ENCODE measurements at regions of chr6 and their contacts with region 1.

Region 1: DNA sequence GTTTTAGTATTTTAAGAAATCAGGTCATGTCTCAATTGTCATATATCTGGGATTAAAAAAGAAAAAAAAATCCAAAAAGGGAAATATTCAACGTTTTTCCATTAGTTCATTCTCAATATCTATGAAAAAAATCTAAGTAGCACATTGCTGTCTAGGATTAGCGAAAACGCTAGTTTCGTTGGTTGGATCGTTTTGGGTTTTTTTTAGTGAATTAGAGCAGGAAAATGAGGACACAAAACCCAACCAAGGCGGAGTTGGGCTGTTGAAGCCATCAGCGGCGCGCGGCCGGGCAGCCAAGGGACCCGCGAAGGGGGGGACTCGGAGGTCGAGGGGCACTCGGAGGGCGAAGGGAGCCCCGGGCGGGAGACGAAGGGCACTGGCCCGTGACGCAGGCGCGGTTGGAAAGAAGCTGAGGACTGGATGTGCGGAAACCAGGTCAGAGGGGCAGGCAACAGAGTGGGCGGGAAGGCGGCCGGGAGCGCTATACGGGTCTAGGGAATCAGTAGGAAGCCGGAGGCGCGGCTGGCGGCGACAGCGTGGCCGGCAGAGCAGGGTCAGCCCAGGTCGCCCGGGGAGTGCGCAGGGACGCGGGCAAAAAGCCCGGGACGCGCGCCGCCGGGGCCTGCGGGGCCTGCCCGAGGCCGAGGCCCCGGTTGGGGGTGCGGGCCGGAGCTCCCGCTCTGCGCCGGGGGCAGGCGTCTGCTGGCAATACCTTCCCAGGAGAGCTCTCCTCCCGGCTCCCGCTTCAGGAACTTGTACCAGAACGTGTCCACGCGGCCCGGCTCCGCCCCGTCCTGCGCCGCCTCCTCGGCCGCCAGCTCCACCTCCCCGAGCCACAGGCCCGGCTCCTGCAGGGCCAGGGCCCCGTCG is 599 bp downstream of the EPM2A start:
- DNase-seq: peak; percentile 90
- H3K4me3 Mint-ChIP-seq: peak overlapping the region; percentile 99
- H3K27ac Mint-ChIP-seq: peak overlapping the region; percentile 90
- H3K4me1 Mint-ChIP-seq: no peaks in the 10 kb centered on the region
- H3K27me3 Mint-ChIP-seq: no peaks in the 10 kb centered on the region
- CTCF ChIP-seq: no peak

Region 2: GRCh38 chr6:145801021-145801420 is 66.3 kb after region 1 on chr6:
- CTCF ChIA-PET with region 1: no interaction called
- POLR2A ChIA-PET with region 1: interaction called, 12 read pairs
- intact Hi-C with region 1: no loop called
- DNase-seq: no peak
- H3K4me3 Mint-ChIP-seq: no peak overlapping the region
- H3K27ac Mint-ChIP-seq: peak overlapping the region; percentile 35
- H3K4me1 Mint-ChIP-seq: no peaks in the 10 kb centered on the region
- H3K27me3 Mint-ChIP-seq: no peaks in the 10 kb centered on the region
- CTCF ChIP-seq: no peak

Region 3: GRCh38 chr6:145814501-145815308 is 80.0 kb after region 1 on chr6 and contains the start of gene FBXO30:
- CTCF ChIA-PET with region 1: interaction called, 24 read pairs
- POLR2A ChIA-PET with region 1: interaction called, 158 read pairs
- intact Hi-C with region 1: loop called (anchors 1 kb)
- DNase-seq: peak; percentile 86
- H3K4me3 Mint-ChIP-seq: peak within 1 kb of the TSS; percentile 81
- H3K27ac Mint-ChIP-seq: peak within 1 kb of the TSS; percentile 95
- H3K4me1 Mint-ChIP-seq: peaks cover 32% of the 10 kb centered on the region
- H3K27me3 Mint-ChIP-seq: no peaks in the 10 kb centered on the region
- CTCF ChIP-seq: no peak
- total RNA-seq, gene FBXO30: 10.6 and 10.9 TPM in 2 replicates

Region 4: GRCh38 chr6:146489468-146490151 is 754.9 kb after region 1 on chr6:
- CTCF ChIA-PET with region 1: no interaction called
- POLR2A ChIA-PET with region 1: no interaction called
- intact Hi-C with region 1: no loop called
- DNase-seq: no peak
- H3K4me3 Mint-ChIP-seq: no peak overlapping the region
- H3K27ac Mint-ChIP-seq: no peak overlapping the region
- H3K4me1 Mint-ChIP-seq: no peaks in the 10 kb centered on the region
- H3K27me3 Mint-ChIP-seq: no peaks in the 10 kb centered on the region
- CTCF ChIP-seq: no peak

Region 5: DNA sequence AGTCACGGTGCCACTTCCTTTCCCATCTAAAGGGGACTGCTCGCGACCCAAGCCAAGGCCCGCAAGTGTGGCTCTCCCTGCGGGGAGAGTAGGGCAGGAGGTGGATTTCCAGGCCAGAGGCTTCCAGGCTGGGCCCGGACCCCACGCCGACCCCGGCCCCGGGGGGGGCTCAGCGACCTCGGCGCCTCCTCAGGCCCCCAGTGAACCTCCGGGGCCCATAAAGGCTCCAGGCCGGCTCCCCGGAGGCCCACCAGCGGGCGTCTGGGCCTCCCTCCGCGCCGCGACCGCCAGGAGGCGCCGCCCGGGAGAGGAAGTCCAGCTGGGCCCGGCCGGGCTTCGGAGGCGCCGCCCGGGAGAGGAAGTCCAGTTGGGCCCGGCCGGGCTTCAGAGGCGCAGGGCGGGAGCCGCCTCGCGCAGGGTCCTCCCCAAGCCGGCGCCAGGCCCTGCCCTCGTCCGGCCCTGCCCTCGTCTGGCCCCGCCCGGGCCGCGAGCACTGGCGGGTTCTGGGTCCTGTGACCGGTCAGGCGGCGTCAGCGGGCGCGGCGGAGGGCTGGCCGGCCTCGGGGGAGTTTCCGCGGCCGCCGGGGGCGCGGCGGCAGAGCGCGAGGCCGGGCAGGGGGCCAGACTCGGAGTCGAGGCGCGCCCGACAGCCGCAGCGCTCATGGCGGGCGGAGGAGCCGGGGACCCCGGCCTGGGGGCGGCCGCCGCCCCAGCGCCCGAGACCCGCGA is 808.7 kb after region 1 on chr6 and contains the start of gene RAB32:
- CTCF ChIA-PET with region 1: no interaction called
- POLR2A ChIA-PET with region 1: interaction called, 3 read pairs
- intact Hi-C with region 1: loop called (anchors 10 kb)
- DNase-seq: peak; percentile 93
- H3K4me3 Mint-ChIP-seq: peak within 1 kb of the TSS; percentile 94
- H3K27ac Mint-ChIP-seq: peak within 1 kb of the TSS; percentile 97
- H3K4me1 Mint-ChIP-seq: peaks cover 13% of the 10 kb centered on the region
- H3K27me3 Mint-ChIP-seq: no peaks in the 10 kb centered on the region
- CTCF ChIP-seq: peak; percentile 64
- total RNA-seq, gene RAB32: 39.7 and 73.6 TPM in 2 replicates

Measured in MCF 10A (cell line).